Common myeloid progenitor, CD34-positive (primary cell): ENCODE measurements at regions of chr10 and their contacts with region 1.

Region 1: DNA sequence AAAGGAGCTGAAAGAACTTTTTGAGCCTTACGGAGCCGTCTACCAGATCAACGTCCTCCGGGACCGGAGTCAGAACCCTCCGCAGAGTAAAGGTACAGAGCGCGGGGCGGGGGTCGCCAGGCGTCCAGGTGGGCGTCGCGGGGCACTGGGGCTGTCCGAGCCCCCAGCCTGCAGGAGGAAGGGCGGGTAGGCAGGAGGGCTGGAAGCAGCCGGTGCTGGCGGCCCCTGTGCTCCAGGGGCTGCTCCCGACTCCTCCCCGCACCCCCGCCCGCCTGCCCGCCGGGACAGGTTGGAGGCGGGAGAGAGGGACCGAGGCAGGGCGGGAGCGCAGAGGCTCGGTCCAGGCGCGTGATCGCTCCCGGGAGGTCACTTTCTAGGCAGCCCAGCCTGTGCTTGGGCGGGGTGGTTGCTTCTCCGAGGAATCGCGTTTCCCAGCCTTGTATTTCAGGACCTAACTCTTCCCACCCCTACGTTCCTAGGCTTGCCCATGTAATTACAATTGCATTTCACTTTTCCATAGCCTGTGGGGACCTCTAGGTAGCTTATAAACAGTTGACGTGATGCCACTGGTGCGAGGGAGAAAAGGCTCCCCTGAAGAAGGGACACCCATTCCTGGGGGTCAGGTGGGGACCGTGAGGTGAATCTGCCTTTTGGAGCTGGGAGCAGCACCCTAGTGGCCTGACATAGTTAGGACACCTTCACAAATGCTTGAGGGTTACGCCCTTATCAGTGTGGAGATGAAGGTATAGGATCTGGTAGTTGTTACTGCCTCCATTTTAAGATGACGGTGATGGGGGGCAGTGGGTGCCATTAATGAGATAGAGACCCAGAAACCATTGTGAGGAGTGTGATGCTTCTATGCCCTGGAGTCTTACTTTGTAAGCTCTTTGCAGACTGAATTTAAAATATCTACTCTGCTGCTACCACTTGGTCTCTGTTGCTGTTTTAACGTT is 148.2 kb downstream of the CELF2 start:
- DNase-seq: peak; percentile 82 to 93 (median 89)
- H3K4me3 ChIP-seq: peak overlapping the region; percentile 88 to 99 (median 97)
- H3K27ac ChIP-seq: peak overlapping the region; percentile 85 to 95
- H3K4me1 ChIP-seq: peaks cover 66 to 80% (median 73%) of the 10 kb centered on the region in 4 experiments
- H3K27me3 ChIP-seq: no peaks in the 10 kb centered on the region

Region 2: GRCh38 chr10:11178606-11179515 is 13.0 kb after region 1 on chr10:
- CTCF ChIA-PET with region 1: interaction called, 58 read pairs
- POLR2A ChIA-PET with region 1: interaction called, 63 read pairs
- DNase-seq: peak; percentile 96 to 99 (median 98)
- H3K4me3 ChIP-seq: peak overlapping the region in 3 of 7 experiments; percentile 30 to 32 (median 31)
- H3K27ac ChIP-seq: peak overlapping the region; percentile 72 to 95
- H3K4me1 ChIP-seq: peaks cover 57 to 96% (median 82%) of the 10 kb centered on the region in 4 experiments
- H3K27me3 ChIP-seq: no peaks in the 10 kb centered on the region